CD4-positive, alpha-beta memory T cell (primary cell): ENCODE measurements at regions of chr13 and their contacts with region 1.

Region 1: DNA sequence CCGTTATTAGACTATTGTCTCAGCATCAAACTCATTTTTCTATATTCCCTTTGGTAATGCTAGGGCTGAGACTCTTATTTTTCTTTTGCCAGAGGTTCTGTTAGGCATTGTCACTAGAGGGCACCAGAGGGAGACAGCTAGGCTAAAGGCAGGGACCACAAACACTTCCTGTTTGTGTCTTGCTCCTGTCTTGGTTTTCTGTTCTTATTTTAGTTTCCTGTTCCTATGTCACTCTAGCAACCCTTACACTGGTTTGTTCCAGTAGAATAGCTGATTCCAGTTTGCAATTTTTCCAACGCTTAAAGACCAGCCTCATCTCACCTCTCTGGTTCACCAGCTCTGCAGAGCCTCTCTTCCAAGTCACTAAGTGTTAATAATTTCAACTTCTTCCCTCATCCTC is 772.0 kb downstream of the DIAPH3 start:
- DNase-seq: peak; percentile 66 to 75 (median 73)
- H3K4me3 ChIP-seq: no peak overlapping the region
- H3K4me3 Mint-ChIP-seq: no peak overlapping the region
- H3K27ac ChIP-seq: no peak overlapping the region
- H3K27ac Mint-ChIP-seq: no peak overlapping the region
- H3K4me1 ChIP-seq: peaks cover 17% of the 10 kb centered on the region
- H3K4me1 Mint-ChIP-seq: no peaks in the 10 kb centered on the region
- H3K27me3 ChIP-seq: no peaks in the 10 kb centered on the region
- H3K27me3 Mint-ChIP-seq: peaks cover 6 to 11% of the 10 kb centered on the region in 2 donors

Region 2: GRCh38 chr13:59374720-59375119 is 17.0 kb before region 1 on chr13:
- CTCF ChIA-PET with region 1: interaction called, 10 read pairs
- POLR2A ChIA-PET with region 1: no interaction called
- intact Hi-C with region 1: no loop called
- DNase-seq: no peak
- H3K4me3 ChIP-seq: no peak overlapping the region
- H3K4me3 Mint-ChIP-seq: no peak overlapping the region
- H3K27ac ChIP-seq: no peak overlapping the region
- H3K27ac Mint-ChIP-seq: no peak overlapping the region
- H3K4me1 ChIP-seq: no peaks in the 10 kb centered on the region
- H3K4me1 Mint-ChIP-seq: no peaks in the 10 kb centered on the region
- H3K27me3 ChIP-seq: no peaks in the 10 kb centered on the region
- H3K27me3 Mint-ChIP-seq: peaks cover 15 to 20% of the 10 kb centered on the region in 2 donors

Region 3: DNA sequence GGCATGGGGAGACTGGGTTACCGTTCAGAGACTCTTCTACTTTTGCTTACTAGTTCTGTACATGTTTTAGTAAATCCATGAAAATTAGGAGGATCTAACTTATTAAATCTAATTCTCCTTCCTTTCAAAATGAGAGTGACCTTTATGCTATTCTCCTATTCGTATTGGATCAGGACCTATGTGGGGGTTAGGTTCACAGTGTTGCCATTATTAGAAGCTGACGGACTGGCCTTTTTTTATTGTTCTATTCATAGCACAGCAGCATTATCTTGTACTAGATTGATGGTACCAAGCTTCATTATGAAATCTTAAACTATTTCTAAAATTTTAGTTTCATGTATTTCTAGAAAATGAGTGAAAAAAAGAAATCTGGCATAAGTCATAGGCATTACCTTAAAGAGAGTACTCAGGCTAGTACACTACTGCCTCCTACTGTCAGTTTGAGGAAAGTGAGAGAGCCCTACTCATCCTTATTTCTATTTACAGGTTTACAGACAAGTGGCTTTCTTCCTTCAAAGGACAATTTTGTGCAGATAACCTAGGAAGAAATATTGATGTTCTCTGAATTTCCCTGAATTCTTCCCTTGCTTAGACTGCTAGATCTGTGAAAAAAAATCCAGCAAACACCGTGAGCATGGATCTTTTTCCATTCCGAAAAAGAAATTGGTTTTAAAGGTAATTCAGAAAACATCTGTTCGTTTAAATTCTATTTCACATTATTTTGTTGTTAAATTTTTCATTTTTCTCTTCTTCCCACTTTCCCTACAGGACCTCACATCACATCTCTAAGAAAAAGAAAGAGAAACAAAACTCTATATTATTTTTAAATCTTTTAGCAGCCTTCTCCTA is 286.5 kb after region 1 on chr13:
- CTCF ChIA-PET with region 1: interaction called, 88 read pairs
- POLR2A ChIA-PET with region 1: interaction called, 5 read pairs
- intact Hi-C with region 1: loop called (anchors 1 kb)
- DNase-seq: peak in 4 of 5 donors; percentile 23 to 38 (median 34)
- H3K4me3 ChIP-seq: no peak overlapping the region
- H3K4me3 Mint-ChIP-seq: no peak overlapping the region
- H3K27ac ChIP-seq: no peak overlapping the region
- H3K27ac Mint-ChIP-seq: no peak overlapping the region
- H3K4me1 ChIP-seq: peaks cover 6% of the 10 kb centered on the region
- H3K4me1 Mint-ChIP-seq: peaks cover 0 to 6% (median under 1%) of the 10 kb centered on the region in 4 donors
- H3K27me3 ChIP-seq: no peaks in the 10 kb centered on the region
- H3K27me3 Mint-ChIP-seq: no peaks in the 10 kb centered on the region

Region 4: GRCh38 chr13:59906413-59907049 is 514.8 kb after region 1 on chr13:
- CTCF ChIA-PET with region 1: interaction called, 8 read pairs
- POLR2A ChIA-PET with region 1: no interaction called
- intact Hi-C with region 1: loop called (anchors 5 kb)
- DNase-seq: no peak
- H3K4me3 ChIP-seq: no peak overlapping the region
- H3K4me3 Mint-ChIP-seq: no peak overlapping the region
- H3K27ac ChIP-seq: no peak overlapping the region
- H3K27ac Mint-ChIP-seq: no peak overlapping the region
- H3K4me1 ChIP-seq: no peaks in the 10 kb centered on the region
- H3K4me1 Mint-ChIP-seq: peaks cover 0 to 2% (median 0%) of the 10 kb centered on the region in 4 donors
- H3K27me3 ChIP-seq: no peaks in the 10 kb centered on the region
- H3K27me3 Mint-ChIP-seq: no peaks in the 10 kb centered on the region

Region 5: GRCh38 chr13:60335531-60335930 is 943.8 kb after region 1 on chr13:
- CTCF ChIA-PET with region 1: interaction called, 8 read pairs
- POLR2A ChIA-PET with region 1: no interaction called
- intact Hi-C with region 1: loop called (anchors 1 kb)
- DNase-seq: peak in 1 of 5 donors; percentile 6
- H3K4me3 ChIP-seq: no peak overlapping the region
- H3K4me3 Mint-ChIP-seq: no peak overlapping the region
- H3K27ac ChIP-seq: no peak overlapping the region
- H3K27ac Mint-ChIP-seq: no peak overlapping the region
- H3K4me1 ChIP-seq: no peaks in the 10 kb centered on the region
- H3K4me1 Mint-ChIP-seq: no peaks in the 10 kb centered on the region
- H3K27me3 ChIP-seq: no peaks in the 10 kb centered on the region
- H3K27me3 Mint-ChIP-seq: peaks cover 0 to 1% of the 10 kb centered on the region in 2 donors